ENCODE measurements at regions of chr4 and their contacts with region 1.

Region 1: GRCh38 chr4:152591396-152591795 is 55.5 kb upstream of the FBXW7 start:
- DNase-seq: peak; percentile 69
- H3K4me3 ChIP-seq: peak overlapping the region; percentile 25
- H3K27ac ChIP-seq: no peak overlapping the region
- H3K4me1 ChIP-seq: peaks cover 44% of the 10 kb centered on the region
- H3K27me3 ChIP-seq: no peaks in the 10 kb centered on the region
- CTCF ChIP-seq: no peak

Region 2: DNA sequence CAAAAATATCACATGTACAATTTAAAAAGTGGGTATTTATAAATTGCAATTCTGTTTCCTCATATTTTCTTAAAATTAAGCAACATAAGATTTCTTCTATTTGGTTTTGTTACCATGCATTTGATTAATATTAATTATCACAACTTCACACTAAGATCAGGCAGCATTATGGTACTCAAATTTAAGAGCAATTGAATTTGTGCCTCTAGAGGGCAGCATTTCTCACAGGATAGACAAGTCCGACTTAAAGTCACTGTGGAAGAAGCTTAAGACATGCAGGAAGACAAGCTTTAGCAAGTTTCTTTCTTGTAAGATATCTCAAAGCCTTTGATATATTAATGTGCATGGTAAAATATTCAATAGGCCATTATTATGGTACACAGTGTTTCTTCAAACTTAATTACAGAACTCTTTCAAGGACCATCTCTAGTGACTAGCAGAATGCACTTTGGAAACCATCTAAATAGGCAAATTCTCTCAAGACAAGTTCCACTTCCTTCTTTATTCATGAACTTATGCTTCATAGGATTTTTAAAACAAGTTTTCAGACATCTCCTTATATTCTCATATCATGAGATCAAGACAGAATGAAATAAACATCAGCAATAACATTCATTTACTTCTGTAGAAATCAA is 90.5 kb before region 1 on chr4:
- CTCF ChIA-PET with region 1: interaction called, 13 read pairs
- POLR2A ChIA-PET with region 1: no interaction called
- intact Hi-C with region 1: no loop called
- DNase-seq: peak; percentile 89
- H3K4me3 ChIP-seq: no peak overlapping the region
- H3K27ac ChIP-seq: no peak overlapping the region
- H3K4me1 ChIP-seq: peaks cover 10% of the 10 kb centered on the region
- H3K27me3 ChIP-seq: no peaks in the 10 kb centered on the region
- CTCF ChIP-seq: peak; percentile 88

Region 3: DNA sequence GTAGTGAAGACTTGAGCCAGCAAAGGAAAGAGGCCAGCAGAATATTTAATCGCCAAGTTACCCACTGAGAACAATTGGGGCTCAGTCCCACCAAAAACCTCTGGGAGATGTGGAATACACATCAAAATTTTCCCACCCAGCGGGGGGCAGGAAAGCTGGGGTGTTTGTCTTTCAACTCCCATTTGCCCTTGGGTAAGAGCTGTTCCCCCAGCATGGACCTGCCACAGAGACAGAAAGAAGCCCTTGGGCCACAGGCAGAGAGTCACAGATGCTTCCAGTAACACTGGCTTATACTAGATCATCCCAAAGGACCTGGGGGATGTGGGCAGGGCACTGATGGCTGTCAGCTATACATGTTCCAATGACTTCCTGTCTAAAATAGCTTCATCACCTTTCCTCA is 36.7 kb before region 1 on chr4:
- CTCF ChIA-PET with region 1: no interaction called
- POLR2A ChIA-PET with region 1: no interaction called
- intact Hi-C with region 1: no loop called
- DNase-seq: no peak
- H3K4me3 ChIP-seq: no peak overlapping the region
- H3K27ac ChIP-seq: no peak overlapping the region
- H3K4me1 ChIP-seq: no peaks in the 10 kb centered on the region
- H3K27me3 ChIP-seq: no peaks in the 10 kb centered on the region
- CTCF ChIP-seq: no peak

Measured in A673 (cell line).